CD4-positive, alpha-beta memory T cell (primary cell): ENCODE measurements at regions of chr19 and their contacts with region 1.

Region 1: DNA sequence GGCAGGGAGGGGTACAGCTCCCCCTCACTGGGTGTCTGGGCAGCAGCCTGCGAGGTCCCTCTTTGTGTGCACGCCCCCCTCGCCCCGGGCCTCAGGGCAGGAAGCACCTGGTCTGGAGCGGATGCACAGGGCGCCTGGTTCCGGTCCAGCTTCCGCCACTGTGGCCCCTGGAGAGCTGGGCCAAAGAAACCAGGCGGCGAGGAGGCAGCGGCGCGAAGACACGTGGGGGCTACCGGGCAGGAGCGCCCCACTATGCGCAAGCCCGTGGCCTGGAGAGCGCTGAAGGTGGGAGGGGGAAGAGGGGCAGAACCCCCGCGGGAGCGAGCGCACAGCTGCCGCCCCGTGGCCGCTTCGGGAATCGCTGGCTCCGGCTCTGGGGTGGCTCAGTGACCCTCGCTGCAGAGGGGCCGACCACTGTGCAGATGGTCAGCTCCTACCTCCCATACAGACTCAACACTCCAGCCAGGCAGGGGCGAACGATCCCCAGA is 1.7 kb upstream of the LYL1 start:
- DNase-seq: peak; percentile 50 to 74 (median 60)
- H3K4me3 ChIP-seq: peak overlapping the region; percentile 65 to 73
- H3K4me3 Mint-ChIP-seq: peak overlapping the region; percentile 87 to 97 (median 92)
- H3K27ac ChIP-seq: peak overlapping the region; percentile 48
- H3K27ac Mint-ChIP-seq: peak overlapping the region; percentile 83 to 94 (median 93)
- H3K4me1 ChIP-seq: peaks cover 63% of the 10 kb centered on the region
- H3K4me1 Mint-ChIP-seq: peaks cover 18 to 49% (median 32%) of the 10 kb centered on the region in 4 donors
- H3K27me3 ChIP-seq: no peaks in the 10 kb centered on the region
- H3K27me3 Mint-ChIP-seq: no peaks in the 10 kb centered on the region

Region 2: DNA sequence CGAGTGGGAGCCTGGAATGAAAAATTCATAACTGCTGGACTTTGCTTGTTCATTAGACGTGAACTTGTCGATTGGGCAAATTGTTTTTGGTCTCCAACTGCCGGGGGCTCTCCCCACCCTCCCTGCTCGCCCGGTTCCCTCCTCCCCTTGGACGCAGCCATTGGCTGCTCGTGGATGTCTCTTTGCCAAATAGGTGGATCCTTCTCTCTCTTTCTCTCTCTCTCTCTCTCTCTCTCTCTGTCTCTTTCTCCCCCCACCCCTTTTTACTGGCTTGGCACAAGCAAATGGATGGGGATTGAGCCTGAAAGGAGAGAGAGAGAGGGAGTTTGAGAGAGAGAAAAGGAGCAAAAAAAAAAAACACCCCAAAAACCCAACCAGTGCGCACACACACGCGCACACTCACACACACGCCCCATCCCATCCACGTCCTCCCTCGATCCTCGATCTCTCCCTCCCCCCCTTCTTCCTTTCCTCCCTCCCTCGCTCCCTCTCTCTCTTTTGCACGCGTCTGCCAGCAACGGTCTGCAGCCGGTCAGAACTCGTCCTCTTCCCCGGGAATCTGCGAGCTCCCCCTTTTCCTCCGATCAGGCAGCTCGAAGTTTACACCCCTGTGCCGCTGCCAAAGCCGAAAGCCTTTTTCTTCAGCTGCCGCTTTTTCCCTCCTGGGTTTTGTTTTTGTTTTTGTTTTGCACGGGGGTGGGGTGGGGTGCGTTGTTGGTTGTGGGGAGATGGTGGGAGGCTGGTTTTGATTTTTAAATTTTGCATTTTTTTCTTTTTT is 81.4 kb before region 1 on chr19:
- CTCF ChIA-PET with region 1: no interaction called
- POLR2A ChIA-PET with region 1: no interaction called
- intact Hi-C with region 1: no loop called
- DNase-seq: no peak
- H3K4me3 ChIP-seq: no peak overlapping the region
- H3K4me3 Mint-ChIP-seq: peak overlapping the region; percentile 48 to 79 (median 70)
- H3K27ac ChIP-seq: no peak overlapping the region
- H3K27ac Mint-ChIP-seq: no peak overlapping the region
- H3K4me1 ChIP-seq: peaks cover 19% of the 10 kb centered on the region
- H3K4me1 Mint-ChIP-seq: peaks cover 10 to 29% (median 18%) of the 10 kb centered on the region in 4 donors
- H3K27me3 ChIP-seq: peaks cover 13% of the 10 kb centered on the region
- H3K27me3 Mint-ChIP-seq: peaks cover 29 to 34% of the 10 kb centered on the region in 2 donors

Region 3: GRCh38 chr19:13093407-13094105 is 10.8 kb before region 1 on chr19:
- CTCF ChIA-PET with region 1: interaction called, 40 read pairs
- POLR2A ChIA-PET with region 1: interaction called, 42 read pairs
- intact Hi-C with region 1: no loop called
- DNase-seq: peak; percentile 76 to 82 (median 78)
- H3K4me3 ChIP-seq: no peak overlapping the region
- H3K4me3 Mint-ChIP-seq: peak overlapping the region in 2 of 8 donors; percentile 33 to 64
- H3K27ac ChIP-seq: no peak overlapping the region
- H3K27ac Mint-ChIP-seq: peak overlapping the region in 4 of 7 donors; percentile 24 to 68 (median 36)
- H3K4me1 ChIP-seq: peaks cover 38% of the 10 kb centered on the region
- H3K4me1 Mint-ChIP-seq: peaks cover 11 to 37% (median 18%) of the 10 kb centered on the region in 4 donors
- H3K27me3 ChIP-seq: peaks cover 15% of the 10 kb centered on the region
- H3K27me3 Mint-ChIP-seq: peaks cover 5 to 9% of the 10 kb centered on the region in 2 donors

Region 4: GRCh38 chr19:13155472-13156359 is 51.3 kb after region 1 on chr19:
- CTCF ChIA-PET with region 1: interaction called, 4 read pairs
- POLR2A ChIA-PET with region 1: interaction called, 39 read pairs
- intact Hi-C with region 1: loop called (anchors 1 kb)
- DNase-seq: peak; percentile 80 to 89 (median 83)
- H3K4me3 ChIP-seq: peak overlapping the region; percentile 98 to 100
- H3K4me3 Mint-ChIP-seq: peak overlapping the region; percentile 95 to 99 (median 99)
- H3K27ac ChIP-seq: peak overlapping the region; percentile 98
- H3K27ac Mint-ChIP-seq: peak overlapping the region; percentile 98 to 99 (median 99)
- H3K4me1 ChIP-seq: peaks cover 48% of the 10 kb centered on the region
- H3K4me1 Mint-ChIP-seq: peaks cover 27 to 77% (median 38%) of the 10 kb centered on the region in 4 donors
- H3K27me3 ChIP-seq: no peaks in the 10 kb centered on the region
- H3K27me3 Mint-ChIP-seq: peaks cover 0 to 3% of the 10 kb centered on the region in 2 donors

Region 5: DNA sequence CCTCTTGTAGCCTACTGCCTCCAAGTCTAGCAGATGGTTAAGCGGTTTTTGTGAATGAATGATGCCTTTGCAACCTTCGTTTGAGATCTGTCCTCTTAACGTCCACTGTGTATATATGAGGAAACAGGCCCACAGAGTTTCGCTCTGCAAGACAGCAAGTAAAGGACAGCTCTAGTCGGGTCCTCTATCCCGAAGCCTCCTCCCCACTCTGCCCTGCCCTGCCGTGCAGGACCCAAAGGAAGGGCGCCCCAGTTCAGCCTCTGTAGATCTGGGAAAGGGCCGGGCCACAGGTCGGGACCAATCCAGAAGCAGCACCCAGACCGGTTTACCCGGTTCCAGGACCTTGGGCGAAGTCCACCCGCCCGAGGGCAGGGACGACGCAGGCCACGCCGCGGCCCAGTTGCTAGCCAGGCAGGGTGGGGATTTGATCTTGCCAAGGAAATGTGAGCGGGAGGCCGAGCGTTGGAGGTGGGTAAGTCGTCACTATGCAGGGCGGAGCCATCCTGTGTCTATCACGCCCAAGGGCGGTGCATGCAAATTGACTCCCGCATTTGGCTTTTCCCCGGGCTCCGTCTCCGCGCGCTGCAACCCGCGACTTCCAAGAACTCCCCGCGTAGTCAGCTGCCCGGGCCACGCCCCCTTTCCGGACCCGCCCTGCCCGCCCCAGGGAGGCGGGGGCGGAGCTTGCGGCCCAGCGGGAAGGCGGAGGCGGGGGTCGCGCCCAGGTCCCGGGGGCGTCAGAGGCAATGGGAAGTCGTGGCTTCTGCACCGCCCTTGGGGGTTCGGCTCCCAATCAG is 58.3 kb after region 1 on chr19:
- CTCF ChIA-PET with region 1: interaction called, 6 read pairs
- POLR2A ChIA-PET with region 1: interaction called, 15 read pairs
- intact Hi-C with region 1: no loop called
- DNase-seq: peak; percentile 69 to 89 (median 72)
- H3K4me3 ChIP-seq: peak overlapping the region; percentile 58 to 91
- H3K4me3 Mint-ChIP-seq: peak overlapping the region; percentile 83 to 91 (median 88)
- H3K27ac ChIP-seq: peak overlapping the region; percentile 82
- H3K27ac Mint-ChIP-seq: peak overlapping the region; percentile 94 to 99 (median 97)
- H3K4me1 ChIP-seq: peaks cover 96% of the 10 kb centered on the region
- H3K4me1 Mint-ChIP-seq: peaks cover 42 to 85% (median 63%) of the 10 kb centered on the region in 4 donors
- H3K27me3 ChIP-seq: no peaks in the 10 kb centered on the region
- H3K27me3 Mint-ChIP-seq: no peaks in the 10 kb centered on the region

Region 6: GRCh38 chr19:13172068-13172896 is 67.9 kb after region 1 on chr19:
- CTCF ChIA-PET with region 1: no interaction called
- POLR2A ChIA-PET with region 1: interaction called, 13 read pairs
- intact Hi-C with region 1: no loop called
- DNase-seq: peak; percentile 62 to 92 (median 63)
- H3K4me3 ChIP-seq: peak overlapping the region; percentile 18 to 46
- H3K4me3 Mint-ChIP-seq: peak overlapping the region; percentile 83 to 94 (median 86)
- H3K27ac ChIP-seq: peak overlapping the region; percentile 53
- H3K27ac Mint-ChIP-seq: peak overlapping the region; percentile 94 to 99 (median 98)
- H3K4me1 ChIP-seq: peaks cover 67% of the 10 kb centered on the region
- H3K4me1 Mint-ChIP-seq: peaks cover 37 to 78% (median 50%) of the 10 kb centered on the region in 4 donors
- H3K27me3 ChIP-seq: no peaks in the 10 kb centered on the region
- H3K27me3 Mint-ChIP-seq: no peaks in the 10 kb centered on the region